Caki2 (cell line): ENCODE measurements at regions of chr5 and their contacts with region 1.

Region 1: DNA sequence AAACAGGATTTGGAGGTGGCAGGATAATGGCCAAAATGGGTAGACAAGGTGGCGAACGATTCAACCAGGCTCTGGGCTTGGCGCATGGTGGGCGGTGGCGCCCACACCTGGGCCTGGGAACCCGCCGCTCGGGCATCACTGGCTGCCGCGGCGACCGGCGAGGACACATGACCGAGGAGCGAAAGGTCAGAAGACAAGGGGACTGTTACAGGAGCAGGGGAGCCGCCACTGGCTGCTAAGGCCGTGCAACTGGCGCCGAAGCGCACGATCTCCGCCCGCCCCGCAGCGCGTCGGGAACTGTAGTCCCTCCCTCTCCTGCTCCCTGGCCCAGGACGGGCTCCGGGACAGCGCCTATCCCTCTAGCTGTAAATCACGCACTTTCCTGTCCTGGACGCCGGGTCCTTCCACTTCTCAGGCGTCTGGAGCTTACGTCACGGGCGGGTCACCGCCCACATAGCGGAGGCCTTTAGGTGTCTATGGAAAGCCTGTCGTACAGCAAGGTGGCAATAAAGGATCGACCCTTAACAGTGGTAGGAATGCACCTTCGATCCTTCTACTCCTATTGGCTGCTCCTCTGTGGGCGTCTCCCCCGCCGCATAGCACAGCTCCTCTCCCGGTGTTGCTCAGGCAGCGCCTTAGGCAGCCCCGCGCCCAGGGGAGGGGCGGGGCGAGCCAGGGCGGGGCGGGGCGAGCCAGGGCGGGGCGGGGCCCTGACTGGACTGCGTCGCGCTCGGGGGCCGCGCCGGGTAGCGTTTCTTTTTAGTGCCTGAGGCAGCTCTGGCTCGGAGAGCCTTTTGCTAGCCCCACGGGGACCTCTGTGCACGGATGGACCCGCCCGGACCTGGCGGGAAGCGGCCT is at the start of gene ICE1:
- DNase-seq: peak; percentile 99
- total RNA-seq, gene ICE1: 7.5 and 12.9 TPM in 2 replicates

Region 2: GRCh38 chr5:4879693-4880303 is 542.4 kb before region 1 on chr5:
- in situ Hi-C with region 1: loop called (anchors 10 kb)
- DNase-seq: peak; percentile 68

Region 3: GRCh38 chr5:5523066-5523505 is 100.9 kb after region 1 on chr5:
- in situ Hi-C with region 1: no loop called
- DNase-seq: no peak